Left cardiac atrium (tissue), 4 donors: ENCODE measurements at regions of chr3 and their contacts with region 1.

Region 1: DNA sequence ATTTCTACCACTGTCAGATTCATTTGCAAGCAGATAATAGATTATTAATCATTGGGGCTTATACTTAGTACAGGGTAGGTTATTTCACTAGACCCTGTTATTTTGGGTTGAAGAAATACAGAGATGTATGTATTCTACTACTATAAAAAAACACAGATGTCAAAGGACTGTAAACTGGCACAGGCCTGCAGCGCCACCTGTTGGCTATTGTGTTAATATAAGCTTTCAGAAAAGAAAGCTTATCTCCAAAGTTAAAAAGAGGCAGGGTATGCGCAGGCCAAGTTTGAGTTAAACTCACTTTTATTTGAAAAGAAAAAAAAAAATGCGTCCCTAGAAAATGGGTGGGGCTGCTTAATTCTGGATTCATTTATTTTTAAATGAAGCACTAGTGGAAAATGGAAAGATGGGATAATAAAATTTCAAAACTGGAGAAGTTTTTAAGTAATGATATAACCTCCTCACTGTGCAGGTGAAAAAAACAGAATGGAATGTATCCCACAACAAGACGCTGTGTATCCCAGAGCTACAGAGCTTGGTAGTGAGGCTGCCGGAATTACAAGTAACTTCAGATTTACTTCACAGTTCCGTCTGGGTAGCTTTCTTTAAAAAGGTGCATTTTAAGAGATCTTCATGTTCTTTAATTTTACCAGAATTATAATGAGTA is 407.2 kb upstream of the TGFBR2 start:
- DNase-seq: peak; percentile 77
- ATAC-seq: peak; percentile 55 to 77

Region 2: DNA sequence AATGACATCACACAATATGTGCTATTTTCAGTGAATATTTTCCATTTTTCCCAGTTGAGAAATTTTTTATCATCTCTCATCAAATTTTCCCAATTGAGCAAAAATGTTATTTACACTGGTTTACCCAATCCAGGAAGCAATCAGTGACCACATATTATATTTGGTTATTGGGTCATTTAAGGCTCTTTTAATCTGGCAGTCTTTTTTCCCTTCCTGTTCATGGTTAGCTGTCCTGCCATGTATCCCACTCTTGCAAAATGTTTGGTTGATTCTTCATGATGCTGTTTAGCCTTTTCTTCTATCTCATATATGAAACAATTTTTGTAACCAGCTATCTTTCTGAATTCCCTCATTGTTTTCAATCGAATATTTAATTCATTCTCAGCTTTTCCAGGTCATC is 292.3 kb before region 1 on chr3:
- intact Hi-C with region 1: no loop called
- DNase-seq: no peak
- ATAC-seq: no peak

Region 3: GRCh38 chr3:30042274-30042859 is 156.9 kb before region 1 on chr3:
- intact Hi-C with region 1: loop called in 1 of 2 experiments (anchors 1 kb)
- DNase-seq: peak; percentile 63
- ATAC-seq: peak; percentile 70 to 75

Region 4: GRCh38 chr3:30112902-30113484 is 86.2 kb before region 1 on chr3:
- intact Hi-C with region 1: loop called in 1 of 2 experiments (anchors 2 kb)
- DNase-seq: no peak
- ATAC-seq: peak; percentile 44 to 59

Region 5: DNA sequence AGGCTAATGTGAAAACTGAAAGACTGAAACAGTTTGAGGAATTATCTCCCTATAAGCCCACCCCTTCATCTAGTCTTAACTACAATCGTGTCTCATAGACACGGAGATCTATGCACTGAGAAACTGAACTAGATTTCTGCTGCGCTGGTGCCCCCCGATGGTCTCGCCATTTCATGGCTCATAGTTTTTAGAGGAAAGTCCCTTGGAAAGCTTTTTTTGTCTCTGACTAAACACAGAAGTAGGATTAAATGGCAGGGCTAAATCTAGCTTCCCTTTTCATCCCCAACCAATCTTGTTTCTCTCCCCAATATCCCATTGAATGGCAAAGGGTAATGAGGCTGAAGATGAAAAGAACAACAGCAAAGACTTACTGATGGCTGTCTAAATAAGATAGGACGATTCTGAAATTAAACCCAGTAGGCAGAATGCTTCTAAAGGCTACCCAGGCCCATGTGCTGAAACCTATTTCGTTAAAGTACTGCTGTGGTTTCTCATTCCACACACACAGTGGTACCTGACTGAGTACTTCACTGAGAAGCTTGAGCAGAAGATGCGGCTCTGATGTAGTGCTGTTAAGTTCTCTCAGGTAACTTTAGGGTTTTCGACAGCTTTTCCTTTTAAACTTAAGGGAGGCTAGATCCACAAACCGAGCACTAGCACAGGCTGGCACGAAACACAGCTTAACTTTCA is 552.5 kb after region 1 on chr3:
- intact Hi-C with region 1: loop called in 1 of 2 experiments (anchors 5 kb)
- DNase-seq: peak; percentile 43
- ATAC-seq: no peak